ENCODE measurements at regions of chr3 and their contacts with region 1.

Region 1: DNA sequence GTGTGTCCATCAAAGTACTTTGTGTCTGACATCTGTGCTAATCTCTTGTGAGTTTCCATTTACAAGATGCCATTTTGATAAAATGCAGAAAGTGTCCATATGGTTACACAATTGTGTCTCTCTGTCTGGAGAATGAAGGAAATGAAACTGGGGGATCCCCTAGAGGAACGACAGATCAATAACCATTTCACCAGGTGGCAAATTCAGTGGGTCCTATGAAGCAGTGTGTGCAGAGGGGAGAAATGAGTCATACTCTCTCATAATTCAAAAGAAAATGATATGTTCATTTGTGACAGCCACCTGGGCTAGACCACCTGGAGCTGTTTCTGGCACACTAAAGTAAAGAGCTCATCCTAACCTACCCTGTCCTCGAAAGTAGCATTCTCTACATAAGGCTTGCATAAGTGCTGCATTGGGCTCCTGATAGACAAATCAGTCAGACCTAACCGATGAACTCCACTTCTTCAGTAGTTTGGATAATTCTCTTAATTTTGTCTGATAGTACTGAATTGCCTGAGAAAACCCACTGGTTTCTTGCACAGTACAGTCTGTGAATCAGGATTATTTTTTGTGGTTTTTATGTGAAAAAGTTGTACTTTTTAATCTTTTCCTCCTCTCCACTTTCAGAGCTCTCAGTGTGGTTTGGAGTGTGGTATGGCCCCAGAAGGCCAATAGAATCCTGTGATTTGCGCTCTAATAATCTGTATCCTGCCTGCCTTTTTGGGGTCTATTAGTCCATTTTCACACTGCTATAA is 10.3 kb upstream of the CD47 start:
- DNase-seq: no peak
- ATAC-seq: no peak
- H3K4me3 ChIP-seq: no peak overlapping the region
- H3K27ac ChIP-seq: no peak overlapping the region
- H3K4me1 ChIP-seq: peaks cover 30 to 89% of the 10 kb centered on the region in 2 experiments
- H3K27me3 ChIP-seq: no peaks in the 10 kb centered on the region
- CTCF ChIP-seq: no peak
- EP300 ChIP-seq: no peak
- POLR2A ChIP-seq: no peak
- RAD21 ChIP-seq: no peak

Region 2: GRCh38 chr3:108006077-108006771 is 94.9 kb before region 1 on chr3:
- CTCF ChIA-PET with region 1: no interaction called
- POLR2A ChIA-PET with region 1: no interaction called
- in situ Hi-C with region 1: no loop called
- intact Hi-C with region 1: loop called (anchors 10 kb)
- DNase-seq: peak in 3 of 4 experiments; percentile 5 to 60 (median 19)
- ATAC-seq: peak; percentile 69
- H3K4me3 ChIP-seq: no peak overlapping the region
- H3K27ac ChIP-seq: no peak overlapping the region
- H3K4me1 ChIP-seq: peaks cover 0 to 2% of the 10 kb centered on the region in 2 experiments; a peak in 1 of 5 replicates
- H3K27me3 ChIP-seq: peaks cover 8 to 22% of the 10 kb centered on the region in 2 experiments; a peak in 4 of 5 replicates
- CTCF ChIP-seq: no peak
- EP300 ChIP-seq: no peak; the same call in 1 of the 2 replicates
- POLR2A ChIP-seq: no peak
- RAD21 ChIP-seq: peak in 1 of 2 experiments; percentile 36; a peak in 2 of 4 replicates

Region 3: GRCh38 chr3:108124337-108125152 is 23.5 kb after region 1 on chr3:
- CTCF ChIA-PET with region 1: no interaction called
- POLR2A ChIA-PET with region 1: interaction called, 4 read pairs
- in situ Hi-C with region 1: no loop called
- intact Hi-C with region 1: loop called (anchors 1 kb)
- DNase-seq: peak in 3 of 4 experiments; percentile 19 to 73 (median 25)
- ATAC-seq: peak; percentile 64
- H3K4me3 ChIP-seq: no peak overlapping the region
- H3K27ac ChIP-seq: peak overlapping the region; percentile 89
- H3K4me1 ChIP-seq: peaks cover 11 to 27% of the 10 kb centered on the region in 2 experiments; a peak in 4 of 5 replicates
- H3K27me3 ChIP-seq: no peaks in the 10 kb centered on the region
- CTCF ChIP-seq: no peak
- EP300 ChIP-seq: peak; percentile 36; the same call in 1 of the 2 replicates
- POLR2A ChIP-seq: peak; percentile 50; the same call in 1 of the 2 replicates
- RAD21 ChIP-seq: peak in 1 of 2 experiments; percentile 5; a peak in 1 of 4 replicates

Region 4: DNA sequence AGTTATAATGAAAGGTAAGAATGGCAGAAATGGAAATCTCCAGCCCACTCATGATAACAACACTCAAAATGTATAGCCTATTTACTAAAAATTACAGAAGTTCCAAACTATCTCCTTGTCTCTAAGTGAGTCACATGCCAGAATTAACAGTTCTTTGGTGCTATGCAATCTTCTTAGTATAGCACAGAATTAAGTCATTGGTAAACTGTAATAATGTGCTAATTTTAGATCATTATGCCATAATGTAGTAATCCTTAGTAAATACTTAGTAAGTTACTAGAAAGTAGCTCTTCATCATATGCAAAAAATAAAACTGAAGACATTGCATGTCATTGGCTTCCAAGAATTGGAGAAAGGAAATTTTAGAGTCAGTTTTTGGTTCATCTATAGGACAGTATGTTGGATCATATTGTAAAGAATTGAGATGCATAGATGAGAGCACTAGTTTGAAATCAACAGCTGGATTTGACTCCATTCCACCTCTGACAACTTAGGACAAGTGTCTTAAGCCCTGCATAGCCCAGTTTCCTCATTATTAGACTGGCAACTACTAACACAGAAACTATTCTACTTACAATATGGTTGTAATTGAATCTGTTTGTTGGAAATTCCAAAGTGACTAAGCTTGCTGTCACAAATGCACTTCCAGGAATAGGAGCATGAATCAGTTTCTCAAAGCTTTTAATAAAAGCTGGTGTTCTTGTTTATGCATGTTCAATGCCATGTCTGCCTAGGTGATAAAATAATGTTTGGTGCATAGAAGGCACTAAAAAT is 29.8 kb after region 1 on chr3:
- CTCF ChIA-PET with region 1: no interaction called
- POLR2A ChIA-PET with region 1: interaction called, 4 read pairs
- in situ Hi-C with region 1: no loop called
- intact Hi-C with region 1: loop called (anchors 5 kb)
- DNase-seq: no peak
- ATAC-seq: no peak
- H3K4me3 ChIP-seq: no peak overlapping the region
- H3K27ac ChIP-seq: no peak overlapping the region
- H3K4me1 ChIP-seq: peaks cover 0 to 29% of the 10 kb centered on the region in 2 experiments; a peak in 3 of 5 replicates
- H3K27me3 ChIP-seq: no peaks in the 10 kb centered on the region
- CTCF ChIP-seq: no peak
- EP300 ChIP-seq: no peak
- POLR2A ChIP-seq: no peak
- RAD21 ChIP-seq: no peak

Region 5: GRCh38 chr3:108145578-108145977 is 44.5 kb after region 1 on chr3:
- CTCF ChIA-PET with region 1: no interaction called
- POLR2A ChIA-PET with region 1: no interaction called
- in situ Hi-C with region 1: no loop called
- intact Hi-C with region 1: no loop called
- DNase-seq: no peak
- ATAC-seq: no peak
- H3K4me3 ChIP-seq: no peak overlapping the region
- H3K27ac ChIP-seq: no peak overlapping the region
- H3K4me1 ChIP-seq: peaks cover 0 to 20% of the 10 kb centered on the region in 2 experiments; a peak in 2 of 5 replicates
- H3K27me3 ChIP-seq: no peaks in the 10 kb centered on the region
- CTCF ChIP-seq: no peak
- EP300 ChIP-seq: peak; percentile 38
- POLR2A ChIP-seq: no peak
- RAD21 ChIP-seq: no peak

Measured in K562 (cell line).